ENCODE measurements at regions of chr11 and their contacts with region 1.

Region 1: GRCh38 chr11:118928108-118928870 is 2.6 kb upstream of the BCL9L start:
- DNase-seq: peak; percentile 96 to 98
- H3K4me3 ChIP-seq: peak overlapping the region; percentile 74 to 86
- H3K27ac ChIP-seq: peak overlapping the region; percentile 96 to 99
- H3K4me1 ChIP-seq: peaks cover 0 to 41% (median 36%) of the 10 kb centered on the region in 4 donors
- H3K27me3 ChIP-seq: no peaks in the 10 kb centered on the region
- CTCF ChIP-seq: peak; percentile 95 to 96

Region 2: DNA sequence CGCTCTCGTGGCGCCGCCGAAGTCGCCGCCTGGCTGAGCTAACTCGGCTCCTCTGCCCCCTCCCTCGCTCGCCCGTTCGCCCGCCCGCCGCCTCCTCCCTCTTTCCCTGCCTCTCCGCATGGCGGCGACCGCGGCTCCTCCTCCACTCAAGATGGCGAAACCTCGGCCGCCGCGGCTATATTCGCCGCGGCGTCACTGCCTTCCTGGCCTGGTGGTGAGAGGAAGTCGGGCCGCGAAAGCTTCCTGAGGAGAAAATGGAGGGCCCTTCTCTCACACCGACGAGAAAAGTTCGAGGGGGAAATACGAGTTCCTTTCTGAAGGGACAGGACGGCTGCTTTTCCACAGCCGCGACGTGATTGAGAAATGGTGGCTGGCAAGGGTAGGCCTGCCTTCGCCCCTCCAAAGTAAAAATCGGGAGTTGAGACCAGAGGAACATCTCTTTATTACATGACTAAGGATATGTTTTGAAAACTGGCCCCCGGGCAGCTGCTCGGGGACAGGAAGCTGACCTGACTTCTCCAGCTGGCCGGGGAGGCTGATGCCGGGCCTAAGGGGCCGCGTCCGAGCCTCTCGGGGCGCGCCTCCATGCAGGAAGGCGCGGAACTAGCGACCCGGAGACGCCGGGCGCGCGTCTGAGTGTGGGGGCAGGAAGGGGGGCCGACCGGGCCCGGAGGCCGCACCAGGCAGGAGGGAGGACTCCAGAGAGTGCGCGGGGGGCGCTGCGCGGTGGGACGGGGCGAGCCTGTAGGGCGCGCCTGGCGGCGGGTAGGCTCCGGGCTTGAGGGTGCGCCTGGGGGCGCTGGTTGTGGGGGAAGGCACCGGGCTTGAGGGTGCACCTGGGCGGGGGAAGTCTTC is 137.0 kb before region 1 on chr11 and contains the start of gene DDX6:
- intact Hi-C with region 1: loop called (anchors 5 kb)
- DNase-seq: peak; percentile 93 to 96
- H3K4me3 ChIP-seq: peak within 1 kb of the TSS; percentile 83 to 94
- H3K27ac ChIP-seq: peak within 1 kb of the TSS; percentile 96 to 100
- H3K4me1 ChIP-seq: peaks cover 0 to 31% (median 20%) of the 10 kb centered on the region in 4 donors
- H3K27me3 ChIP-seq: no peaks in the 10 kb centered on the region
- CTCF ChIP-seq: peak in 1 of 2 experiments; percentile 26

Region 3: DNA sequence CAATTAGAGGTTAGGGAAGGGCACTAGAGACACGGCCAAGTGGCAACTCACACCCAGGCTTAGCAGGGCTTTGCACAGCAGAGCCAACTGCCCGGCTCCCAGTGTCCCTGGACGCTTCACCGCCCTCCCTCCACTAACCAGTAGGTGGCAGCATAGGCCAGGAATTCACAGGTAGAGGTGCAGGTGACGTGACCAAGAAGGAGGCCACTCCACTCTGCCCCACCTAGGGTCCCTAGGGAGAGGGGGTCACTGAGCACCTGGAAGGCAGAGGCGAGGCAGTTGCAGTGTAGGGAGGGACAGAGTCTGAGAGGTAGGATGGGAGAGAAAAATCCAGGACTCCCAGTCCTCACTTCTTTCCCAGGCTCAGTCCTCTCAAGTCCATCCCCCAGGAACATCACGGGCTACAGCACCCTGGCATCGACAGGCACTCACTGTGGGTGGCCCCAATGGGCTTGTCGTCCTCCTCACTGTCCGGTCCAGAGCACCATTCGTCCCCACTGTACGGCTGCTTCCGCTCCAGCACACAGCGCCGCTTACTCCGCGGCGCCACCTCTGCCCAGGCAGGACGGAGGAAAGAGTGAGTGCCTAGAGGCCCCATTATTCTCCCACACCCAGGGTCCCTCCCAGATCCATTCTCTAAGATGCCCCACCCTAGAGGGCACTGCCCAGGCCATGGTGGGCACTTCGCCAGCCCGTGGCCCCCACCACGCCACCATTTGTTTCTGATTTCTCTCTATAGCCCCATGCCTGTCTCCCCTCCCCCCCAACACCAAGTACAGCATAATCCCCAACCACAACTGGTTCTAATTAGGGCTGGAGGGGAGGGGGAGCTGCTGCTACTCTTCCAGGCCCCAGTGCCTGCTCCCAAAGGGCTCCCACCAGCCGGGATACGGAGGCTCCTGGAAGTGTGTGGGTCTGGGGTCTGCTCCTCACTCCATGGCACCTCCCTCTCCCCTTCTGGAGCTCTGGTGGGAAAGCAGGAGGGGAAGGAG is 20.9 kb before region 1 on chr11:
- intact Hi-C with region 1: loop called (anchors 1 kb)
- DNase-seq: peak; percentile 85 to 93
- H3K4me3 ChIP-seq: peak overlapping the region in 1 of 2 donors; percentile 1
- H3K27ac ChIP-seq: peak overlapping the region; percentile 85 to 99
- H3K4me1 ChIP-seq: peaks cover 5 to 76% (median 64%) of the 10 kb centered on the region in 4 donors
- H3K27me3 ChIP-seq: no peaks in the 10 kb centered on the region
- CTCF ChIP-seq: peak; percentile 87 to 98

Region 4: DNA sequence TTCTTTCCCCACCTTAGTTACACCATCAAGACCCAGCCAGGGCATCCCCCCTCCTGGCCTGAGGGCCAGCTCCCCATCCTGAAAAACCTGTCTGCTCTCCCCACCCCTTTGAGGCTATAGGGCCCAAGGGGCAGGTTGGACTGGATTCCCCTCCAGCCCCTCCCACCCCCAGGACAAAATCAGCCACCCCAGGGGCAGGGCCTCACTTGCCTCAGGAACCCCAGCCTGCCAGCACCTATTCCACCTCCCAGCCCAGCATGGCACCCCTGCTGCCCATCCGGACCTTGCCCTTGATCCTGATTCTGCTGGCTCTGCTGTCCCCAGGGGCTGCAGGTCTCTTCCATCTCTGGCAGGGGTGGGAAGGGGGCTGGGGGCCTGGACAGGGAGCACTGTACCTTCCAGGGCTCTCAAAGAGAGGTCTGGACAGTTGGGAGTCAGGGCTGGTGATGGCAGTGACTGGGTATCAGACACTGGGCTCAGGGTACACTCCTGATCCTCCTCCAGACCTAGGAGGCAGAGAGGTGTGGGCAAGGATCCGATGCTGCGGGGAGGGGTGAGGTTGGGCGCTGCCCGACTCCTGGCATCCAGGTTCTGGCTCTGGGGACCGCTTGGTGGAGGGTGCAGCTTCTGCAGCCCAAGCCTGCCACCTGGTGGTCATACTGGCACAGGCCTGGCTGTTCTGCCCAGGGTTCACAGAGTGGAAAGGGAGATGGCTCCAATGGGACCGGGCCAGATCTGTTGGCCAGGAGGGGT is 28.0 kb after region 1 on chr11 and contains the start of gene UPK2:
- intact Hi-C with region 1: no loop called
- DNase-seq: peak; percentile 84 to 91
- H3K4me3 ChIP-seq: no peak within 1 kb of the TSS
- H3K27ac ChIP-seq: no peak within 1 kb of the TSS
- H3K4me1 ChIP-seq: no peaks in the 10 kb centered on the region
- H3K27me3 ChIP-seq: peaks cover 0 to 18% of the 10 kb centered on the region in 2 donors
- CTCF ChIP-seq: peak; percentile 91 to 99

Region 5: DNA sequence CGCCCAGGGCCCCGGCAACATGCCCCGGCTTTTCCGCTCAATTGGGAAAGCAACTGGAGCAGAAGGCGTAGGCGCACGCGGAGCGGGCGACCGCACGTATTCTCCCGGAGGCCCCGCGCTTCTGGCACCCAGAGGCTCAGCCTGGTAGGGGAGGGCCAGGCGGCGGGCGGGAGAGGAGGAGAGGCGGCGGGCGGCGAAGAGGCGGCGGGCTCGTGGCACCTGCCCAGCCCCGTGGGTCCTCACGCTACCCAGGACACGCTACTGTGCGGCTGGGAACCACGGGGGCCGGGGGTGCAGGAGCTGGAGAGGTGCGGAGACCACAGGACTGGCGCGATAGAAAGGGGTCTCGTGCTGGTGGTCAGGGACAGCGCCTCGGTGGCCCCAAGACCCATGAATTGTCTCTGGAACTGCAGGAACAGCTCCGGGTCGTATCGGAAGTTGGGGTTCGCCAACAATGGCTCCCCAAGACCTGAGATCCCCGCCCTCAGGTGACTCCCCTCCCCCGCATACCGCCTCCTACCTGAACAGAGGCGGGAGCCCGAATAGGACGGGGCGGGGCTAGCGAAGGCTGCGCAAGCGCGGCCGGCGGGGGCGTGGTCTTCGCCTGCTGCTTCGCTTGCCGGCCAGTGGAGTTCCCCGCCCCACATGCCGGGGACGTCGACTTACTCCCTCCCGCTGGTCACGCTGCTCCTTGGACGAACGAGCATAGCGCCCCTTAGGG is 102.2 kb after region 1 on chr11 and contains the start of gene SLC37A4:
- intact Hi-C with region 1: no loop called
- DNase-seq: peak; percentile 98 to 99
- H3K4me3 ChIP-seq: peak within 1 kb of the TSS; percentile 74 to 91
- H3K27ac ChIP-seq: peak within 1 kb of the TSS; percentile 78 to 80
- H3K4me1 ChIP-seq: peaks cover 0 to 18% (median 10%) of the 10 kb centered on the region in 4 donors
- H3K27me3 ChIP-seq: no peaks in the 10 kb centered on the region
- CTCF ChIP-seq: peak; percentile 80 to 92

Region 6: DNA sequence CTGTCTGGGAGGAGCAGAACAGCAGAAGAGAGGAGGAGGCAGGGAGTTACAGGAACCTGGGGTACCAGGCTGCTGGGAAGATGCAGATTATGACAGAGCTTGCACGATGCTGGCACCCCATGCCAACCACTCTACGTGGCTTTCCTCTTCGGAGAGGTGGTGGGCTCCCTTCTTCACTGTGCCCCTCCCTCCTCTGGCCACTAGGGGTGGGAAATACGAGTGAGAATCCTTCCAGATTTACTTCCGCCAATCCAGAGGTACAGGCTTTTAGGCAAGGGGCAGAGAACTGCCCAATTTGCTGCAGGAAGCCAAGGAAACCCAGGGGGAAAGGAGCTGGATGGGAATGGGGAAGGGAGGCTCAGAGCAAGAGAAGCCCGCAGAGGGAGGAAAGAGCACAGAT is 116.4 kb after region 1 on chr11:
- intact Hi-C with region 1: no loop called
- DNase-seq: no peak
- H3K4me3 ChIP-seq: no peak overlapping the region
- H3K27ac ChIP-seq: no peak overlapping the region
- H3K4me1 ChIP-seq: no peaks in the 10 kb centered on the region
- H3K27me3 ChIP-seq: no peaks in the 10 kb centered on the region
- CTCF ChIP-seq: no peak

Region 7: GRCh38 chr11:119474682-119475596 is 546.6 kb after region 1 on chr11:
- intact Hi-C with region 1: no loop called
- DNase-seq: peak; percentile 66 to 74
- H3K4me3 ChIP-seq: no peak overlapping the region
- H3K27ac ChIP-seq: no peak overlapping the region
- H3K4me1 ChIP-seq: peaks cover 0 to 3% (median 1%) of the 10 kb centered on the region in 4 donors
- H3K27me3 ChIP-seq: peaks cover 0 to 6% of the 10 kb centered on the region in 2 donors
- CTCF ChIP-seq: peak; percentile 82 to 83